Posterior vena cava (tissue), 2 donors: ENCODE measurements at regions of chr7 and their contacts with region 1.

Region 1: DNA sequence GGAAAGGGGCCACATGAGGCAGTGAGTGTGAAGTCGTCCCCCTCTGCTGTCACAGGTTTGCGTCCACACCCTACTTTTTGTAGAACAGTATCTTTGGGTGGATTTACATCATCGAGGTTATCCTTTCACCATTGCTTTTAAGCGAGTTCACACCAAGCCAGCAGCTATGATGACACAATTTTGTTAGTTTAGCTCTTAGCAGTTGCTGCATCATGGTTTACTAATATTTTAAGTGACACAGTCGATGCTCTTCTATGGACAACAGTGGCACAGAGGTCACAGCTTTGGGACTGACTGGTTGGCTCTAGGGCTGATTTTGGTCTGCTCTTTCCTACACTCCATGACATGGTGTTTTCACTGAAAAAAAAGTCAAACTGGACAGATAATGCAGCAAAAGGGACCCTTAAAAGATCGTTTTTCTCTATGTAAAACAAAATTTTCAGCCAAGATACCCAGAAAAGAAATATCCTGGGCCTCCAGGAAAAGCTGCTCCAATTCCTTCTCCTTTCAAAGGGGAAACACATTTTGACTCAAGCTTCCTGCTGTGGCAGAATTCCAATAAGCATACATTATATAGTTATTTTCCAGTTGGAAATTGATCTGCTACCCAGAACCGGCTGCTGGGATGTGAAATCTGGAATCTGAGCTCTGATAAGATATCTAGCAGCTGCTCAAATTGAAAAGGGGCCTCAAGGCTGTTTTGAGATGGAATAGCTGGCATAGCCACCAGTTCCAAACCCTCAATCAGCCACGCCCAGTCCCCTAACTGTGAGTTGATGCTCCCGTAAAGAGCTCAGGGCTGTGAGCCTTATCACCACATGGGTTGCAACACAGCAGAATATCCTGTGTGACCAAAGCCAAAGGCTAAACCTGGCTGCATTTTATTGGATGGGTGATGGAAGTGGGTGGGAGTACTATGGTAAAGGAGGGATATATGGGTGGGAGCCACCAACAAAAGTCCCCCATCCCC is 114.2 kb downstream of the SMURF1 start:
- DNase-seq: no peak

Region 2: DNA sequence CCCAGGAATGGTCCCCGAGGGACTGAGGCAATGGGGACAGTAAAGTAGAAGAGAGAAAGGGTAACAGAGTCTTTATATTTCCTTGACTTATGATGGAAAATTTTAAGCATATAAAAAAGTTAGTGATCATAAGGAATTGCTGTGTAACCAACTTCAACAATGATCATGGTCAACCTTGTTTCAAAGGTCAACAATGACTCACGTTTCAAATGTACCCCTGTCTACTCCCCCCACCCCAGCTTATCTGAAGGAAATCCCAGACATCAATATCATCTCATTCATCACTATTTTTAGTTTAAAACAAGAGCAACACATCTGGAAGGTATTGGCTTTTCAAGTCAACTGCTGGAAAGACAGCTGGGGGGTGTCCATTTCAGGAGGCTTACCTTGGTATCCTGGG is 21.2 kb after region 1 on chr7:
- intact Hi-C with region 1: loop called in 1 of 2 experiments (anchors 1 kb)
- DNase-seq: no peak

Region 3: GRCh38 chr7:100991631-100992030 is 1961.9 kb after region 1 on chr7:
- intact Hi-C with region 1: no loop called
- DNase-seq: no peak